ENCODE measurements at regions of chr20 and their contacts with region 1.

Region 1: GRCh38 chr20:44080646-44081267 is 106.2 kb downstream of the JPH2 start:
- DNase-seq: peak; percentile 85
- ATAC-seq: peak; percentile 95
- H3K4me3 Mint-ChIP-seq: no peak overlapping the region
- H3K27ac Mint-ChIP-seq: no peak overlapping the region
- H3K4me1 Mint-ChIP-seq: peaks cover 19% of the 10 kb centered on the region
- H3K27me3 Mint-ChIP-seq: peaks cover 7% of the 10 kb centered on the region

Region 2: GRCh38 chr20:43942661-43943290 is 138.0 kb before region 1 on chr20:
- CTCF ChIA-PET with region 1: interaction called, 10 read pairs
- POLR2A ChIA-PET with region 1: no interaction called
- DNase-seq: peak; percentile 53
- ATAC-seq: peak; percentile 79
- H3K4me3 Mint-ChIP-seq: peak overlapping the region; percentile 17
- H3K27ac Mint-ChIP-seq: peak overlapping the region; percentile 74
- H3K4me1 Mint-ChIP-seq: peaks cover 60% of the 10 kb centered on the region
- H3K27me3 Mint-ChIP-seq: peaks cover 45% of the 10 kb centered on the region

Region 3: GRCh38 chr20:44018259-44018941 is 62.4 kb before region 1 on chr20:
- CTCF ChIA-PET with region 1: interaction called, 13 read pairs
- POLR2A ChIA-PET with region 1: no interaction called
- DNase-seq: no peak
- ATAC-seq: no peak
- H3K4me3 Mint-ChIP-seq: no peak overlapping the region
- H3K27ac Mint-ChIP-seq: no peak overlapping the region
- H3K4me1 Mint-ChIP-seq: peaks cover 36% of the 10 kb centered on the region
- H3K27me3 Mint-ChIP-seq: peaks cover 53% of the 10 kb centered on the region

Region 4: DNA sequence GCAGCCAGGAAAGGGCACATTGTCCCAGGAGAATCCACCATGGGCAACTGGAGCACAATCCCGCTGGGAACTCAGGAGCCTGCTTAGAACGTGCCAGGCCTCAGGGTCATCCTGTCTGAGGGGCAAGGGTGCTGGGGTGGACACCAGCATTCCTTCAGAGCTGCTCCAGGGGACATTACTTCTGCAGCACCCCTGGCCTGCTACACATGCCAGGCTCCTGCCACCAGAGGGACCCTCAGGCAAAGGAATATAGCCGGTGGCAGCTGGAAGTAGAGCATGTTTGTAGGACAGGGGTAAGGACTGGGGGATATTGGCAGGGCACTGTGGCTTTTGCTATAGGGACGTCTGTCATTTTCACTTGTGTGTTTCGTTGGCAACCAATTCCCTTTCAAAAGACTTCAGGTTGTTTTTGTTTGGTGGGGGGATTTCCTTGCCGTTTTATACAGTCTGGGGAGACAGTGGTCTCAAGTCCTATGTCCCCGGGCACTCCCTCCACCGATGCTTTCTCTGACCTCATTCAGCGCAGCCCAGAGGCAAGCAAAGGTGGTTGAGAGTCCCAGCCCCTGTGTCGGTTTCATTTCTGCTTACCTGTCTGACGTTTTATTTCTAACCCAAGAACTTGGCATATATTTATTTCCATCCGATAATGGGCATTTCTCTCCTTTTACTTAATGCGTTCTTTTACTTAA is 24.6 kb before region 1 on chr20:
- CTCF ChIA-PET with region 1: interaction called, 103 read pairs
- POLR2A ChIA-PET with region 1: no interaction called
- DNase-seq: peak; percentile 67
- ATAC-seq: peak; percentile 77
- H3K4me3 Mint-ChIP-seq: no peak overlapping the region
- H3K27ac Mint-ChIP-seq: no peak overlapping the region
- H3K4me1 Mint-ChIP-seq: peaks cover 14% of the 10 kb centered on the region
- H3K27me3 Mint-ChIP-seq: peaks cover 17% of the 10 kb centered on the region

Region 5: DNA sequence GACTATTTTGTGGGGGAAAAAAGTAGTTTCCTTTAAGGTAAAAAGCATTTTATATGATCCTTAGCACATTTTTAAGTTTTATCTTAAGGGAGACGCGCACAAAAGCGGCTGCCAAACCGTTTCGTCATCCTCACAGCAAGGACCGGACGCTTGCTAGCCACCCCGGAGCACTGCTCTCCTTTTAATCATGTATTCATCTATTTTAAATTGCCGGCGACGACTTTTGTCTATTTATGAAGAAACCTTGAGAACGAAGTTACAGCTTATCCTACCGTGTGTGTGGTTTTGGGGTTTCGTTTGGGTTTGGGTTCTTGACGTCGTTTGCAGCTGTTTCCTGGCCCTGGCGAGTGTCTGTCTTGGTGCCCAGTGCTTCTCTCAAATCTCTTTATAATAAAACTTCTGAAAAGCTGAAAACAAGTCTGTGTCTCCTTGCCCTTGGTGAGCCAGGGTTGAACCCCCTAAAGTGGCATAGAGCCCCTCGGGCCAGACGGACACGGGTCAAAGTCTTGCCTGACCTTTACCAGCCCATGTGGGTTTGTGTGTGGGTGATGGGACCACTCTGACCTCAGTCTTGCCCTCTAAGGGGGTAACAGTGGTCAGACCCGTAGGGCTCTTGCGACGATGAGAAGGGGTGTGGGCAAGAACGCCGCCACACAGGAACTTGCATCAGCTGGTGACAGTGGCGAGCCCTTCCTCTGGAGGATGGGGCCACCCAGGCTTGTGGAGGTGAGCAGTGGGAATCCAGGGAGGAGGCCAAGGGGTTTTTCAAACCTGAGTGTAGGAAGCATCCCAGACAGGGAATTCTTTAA is 11.3 kb before region 1 on chr20:
- CTCF ChIA-PET with region 1: interaction called, 19 read pairs
- POLR2A ChIA-PET with region 1: interaction called, 9 read pairs
- DNase-seq: peak; percentile 88
- ATAC-seq: peak; percentile 63
- H3K4me3 Mint-ChIP-seq: peak overlapping the region; percentile 72
- H3K27ac Mint-ChIP-seq: peak overlapping the region; percentile 93
- H3K4me1 Mint-ChIP-seq: peaks cover 74% of the 10 kb centered on the region
- H3K27me3 Mint-ChIP-seq: peaks cover 17% of the 10 kb centered on the region

Measured in activated CD8-positive, alpha-beta T cell treated with anti-CD3 and anti-CD28 coated beads, Interleukin-2, amount 10 ng/mL, durations not matched to agents 7 days and 5 days (primary cell).